CD14-positive monocyte (primary cell): ENCODE measurements at regions of chr7 and their contacts with region 1.

Region 1: DNA sequence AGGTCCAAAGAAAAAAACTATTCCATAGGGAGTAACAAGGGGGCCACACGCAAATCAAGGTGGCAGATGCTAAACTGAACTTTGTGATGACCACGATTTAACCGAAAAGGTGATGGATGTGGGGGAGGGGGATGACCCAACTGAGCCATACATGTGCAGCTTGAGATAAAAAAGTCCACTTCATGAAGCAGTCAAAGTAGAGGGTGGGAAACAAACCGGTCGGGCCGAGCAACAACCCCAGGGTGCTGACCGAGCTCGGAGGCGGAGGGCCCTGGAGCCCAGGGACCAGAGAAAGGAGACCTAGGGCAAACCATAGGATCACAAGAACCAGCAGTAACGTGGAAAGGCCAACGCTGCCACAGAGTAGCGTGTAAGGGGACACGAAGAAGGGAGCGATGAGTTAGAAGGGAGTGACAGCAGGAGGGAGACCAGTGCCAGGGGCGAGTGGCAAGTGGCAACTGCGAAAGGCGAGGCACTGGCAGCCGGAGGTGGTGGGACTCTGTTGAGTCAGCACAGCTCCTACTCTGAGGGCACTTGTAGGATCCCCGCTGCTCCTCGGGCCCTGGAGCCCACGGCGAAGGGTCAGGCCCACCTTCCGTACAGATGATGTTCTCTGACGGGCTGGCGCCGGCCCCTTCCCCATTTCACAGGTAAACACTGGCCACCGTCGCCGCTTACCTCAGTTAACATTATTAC is 540 bp downstream of the SNX13 start:
- DNase-seq: peak; percentile 33 to 61 (median 49)
- H3K4me3 ChIP-seq: peak overlapping the region; percentile 85 to 96 (median 94)
- H3K4me3 Mint-ChIP-seq: peak overlapping the region; percentile 96 to 97
- H3K27ac ChIP-seq: peak overlapping the region; percentile 99
- H3K27ac Mint-ChIP-seq: peak overlapping the region; percentile 99 to 100 (median 99)
- H3K4me1 ChIP-seq: peaks cover 24 to 39% of the 10 kb centered on the region in 2 donors
- H3K4me1 Mint-ChIP-seq: peaks cover 38% of the 10 kb centered on the region
- H3K27me3 ChIP-seq: no peaks in the 10 kb centered on the region
- H3K27me3 Mint-ChIP-seq: peaks cover 0 to 2% (median 0%) of the 10 kb centered on the region in 3 donors
- CTCF ChIP-seq: no peak

Region 2: DNA sequence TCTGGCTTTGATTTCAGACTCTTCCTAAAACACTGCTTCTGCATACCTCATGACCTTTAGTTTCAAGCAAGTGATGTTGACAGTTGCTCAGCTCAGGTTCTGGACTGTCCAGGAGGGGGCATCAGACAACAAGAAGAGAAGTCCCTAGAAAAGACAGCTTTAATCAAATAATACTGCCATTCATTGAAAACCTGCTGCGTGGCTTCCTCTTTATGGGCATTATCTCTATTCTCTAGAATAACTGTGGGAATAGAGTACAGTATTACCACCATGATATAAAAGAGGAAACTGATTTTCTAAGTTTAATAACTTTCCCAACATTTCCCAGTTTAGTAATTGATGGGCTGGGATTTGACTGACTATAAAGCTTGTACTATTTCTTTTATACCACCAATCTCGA is 169.8 kb before region 1 on chr7:
- intact Hi-C with region 1: loop called (anchors 5 to 10 kb)
- DNase-seq: peak; percentile 61 to 70 (median 65)
- H3K4me3 ChIP-seq: peak overlapping the region in 1 of 3 experiments; percentile 60
- H3K4me3 Mint-ChIP-seq: no peak overlapping the region
- H3K27ac ChIP-seq: peak overlapping the region in 1 of 2 donors; percentile 68
- H3K27ac Mint-ChIP-seq: peak overlapping the region; percentile 66 to 84 (median 81)
- H3K4me1 ChIP-seq: peaks cover 39 to 43% of the 10 kb centered on the region in 2 donors
- H3K4me1 Mint-ChIP-seq: peaks cover 42% of the 10 kb centered on the region
- H3K27me3 ChIP-seq: no peaks in the 10 kb centered on the region
- H3K27me3 Mint-ChIP-seq: no peaks in the 10 kb centered on the region
- CTCF ChIP-seq: peak; percentile 75

Region 3: GRCh38 chr7:17854261-17855047 is 85.3 kb before region 1 on chr7:
- intact Hi-C with region 1: no loop called
- DNase-seq: no peak
- H3K4me3 ChIP-seq: no peak overlapping the region
- H3K4me3 Mint-ChIP-seq: no peak overlapping the region
- H3K27ac ChIP-seq: no peak overlapping the region
- H3K27ac Mint-ChIP-seq: no peak overlapping the region
- H3K4me1 ChIP-seq: peaks cover 0 to 9% of the 10 kb centered on the region in 2 donors
- H3K4me1 Mint-ChIP-seq: peaks cover 13% of the 10 kb centered on the region
- H3K27me3 ChIP-seq: no peaks in the 10 kb centered on the region
- H3K27me3 Mint-ChIP-seq: no peaks in the 10 kb centered on the region
- CTCF ChIP-seq: no peak